ENCODE measurements at regions of chr3 and their contacts with region 1.

Region 1: GRCh38 chr3:153768561-153769469 is 352.4 kb upstream of the ARHGEF26 start:
- DNase-seq: peak in 2 of 4 donors; percentile 37 to 58
- ATAC-seq: peak; percentile 99
- H3K4me3 ChIP-seq: no peak overlapping the region
- H3K27ac ChIP-seq: no peak overlapping the region
- H3K4me1 ChIP-seq: no peaks in the 10 kb centered on the region
- H3K27me3 ChIP-seq: no peaks in the 10 kb centered on the region
- CTCF ChIP-seq: peak; percentile 72 to 75

Region 2: GRCh38 chr3:153043729-153044328 is 725.0 kb before region 1 on chr3:
- intact Hi-C with region 1: loop called in 1 of 2 experiments (anchors 10 kb)
- DNase-seq: no peak
- ATAC-seq: no peak
- H3K4me3 ChIP-seq: no peak overlapping the region
- H3K27ac ChIP-seq: peak overlapping the region in 1 of 2 donors; percentile 60
- H3K4me1 ChIP-seq: peaks cover 0 to 14% of the 10 kb centered on the region in 2 donors
- H3K27me3 ChIP-seq: no peaks in the 10 kb centered on the region
- CTCF ChIP-seq: no peak

Region 3: DNA sequence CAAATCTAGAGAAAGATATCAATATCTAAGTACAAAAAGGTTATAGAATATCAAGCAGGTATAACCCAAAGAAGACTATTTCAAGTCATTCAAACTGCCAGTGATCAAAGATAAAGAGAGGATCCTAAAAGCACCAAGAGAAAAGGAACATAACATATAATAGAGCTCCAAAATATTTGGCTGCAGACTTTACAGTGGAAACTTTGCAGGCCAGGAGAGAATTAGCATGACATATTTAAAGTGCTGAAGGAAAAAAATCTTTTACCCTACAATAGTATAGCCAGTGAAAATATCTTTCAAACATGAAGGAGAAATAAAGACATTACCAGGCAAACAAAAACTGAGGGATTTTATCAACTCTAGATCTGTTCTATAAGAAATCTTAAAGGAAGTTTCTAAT is 98.1 kb after region 1 on chr3:
- intact Hi-C with region 1: no loop called
- DNase-seq: no peak
- ATAC-seq: no peak
- H3K4me3 ChIP-seq: no peak overlapping the region
- H3K27ac ChIP-seq: no peak overlapping the region
- H3K4me1 ChIP-seq: no peaks in the 10 kb centered on the region
- H3K27me3 ChIP-seq: no peaks in the 10 kb centered on the region
- CTCF ChIP-seq: no peak